ENCODE measurements at regions of chr12 and their contacts with region 1.

Region 1: DNA sequence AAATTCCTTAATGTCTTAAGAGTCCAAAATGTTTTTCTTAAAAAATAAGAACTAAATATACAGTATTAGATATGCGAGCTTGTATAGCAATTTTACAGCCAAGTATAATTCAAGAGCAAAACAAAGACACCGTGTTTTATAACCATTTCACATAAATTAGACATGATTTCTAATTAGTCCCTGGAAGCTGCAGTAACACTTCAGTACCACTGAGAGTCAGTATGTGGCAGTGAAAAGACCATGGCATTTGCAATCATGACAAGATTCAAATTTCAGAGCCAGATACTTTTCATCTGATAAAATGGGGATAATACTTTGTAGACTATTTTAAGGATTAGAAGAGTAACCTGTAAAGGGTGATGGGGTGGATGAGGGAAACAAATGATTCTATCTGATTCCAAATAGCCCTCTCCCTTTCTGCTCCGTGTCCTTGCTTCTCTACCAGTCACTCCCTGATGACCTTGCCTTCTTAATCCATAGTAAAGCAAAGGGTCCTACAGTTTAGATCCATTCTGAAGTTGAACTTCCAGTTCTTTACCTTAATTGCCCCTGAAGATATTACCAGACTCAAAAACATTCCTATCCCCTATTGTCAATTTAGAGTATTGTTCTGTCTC is 145.4 kb upstream of the ABCD2 start:
- DNase-seq: peak; percentile 56
- H3K4me3 ChIP-seq: no peak overlapping the region
- H3K27ac ChIP-seq: no peak overlapping the region
- H3K4me1 ChIP-seq: no peaks in the 10 kb centered on the region
- H3K27me3 ChIP-seq: no peaks in the 10 kb centered on the region
- CTCF ChIP-seq: peak; percentile 93

Region 2: GRCh38 chr12:39632670-39633069 is 132.4 kb before region 1 on chr12:
- CTCF ChIA-PET with region 1: no interaction called
- POLR2A ChIA-PET with region 1: no interaction called
- intact Hi-C with region 1: no loop called
- DNase-seq: no peak
- H3K4me3 ChIP-seq: no peak overlapping the region
- H3K27ac ChIP-seq: no peak overlapping the region
- H3K4me1 ChIP-seq: no peaks in the 10 kb centered on the region
- H3K27me3 ChIP-seq: no peaks in the 10 kb centered on the region
- CTCF ChIP-seq: no peak

Region 3: GRCh38 chr12:39990122-39991101 is 225.4 kb after region 1 on chr12:
- CTCF ChIA-PET with region 1: no interaction called
- POLR2A ChIA-PET with region 1: no interaction called
- intact Hi-C with region 1: loop called (anchors 1 kb)
- DNase-seq: peak; percentile 71
- H3K4me3 ChIP-seq: no peak overlapping the region
- H3K27ac ChIP-seq: no peak overlapping the region
- H3K4me1 ChIP-seq: peaks cover 20% of the 10 kb centered on the region
- H3K27me3 ChIP-seq: no peaks in the 10 kb centered on the region
- CTCF ChIP-seq: peak; percentile 86

Region 4: GRCh38 chr12:40152783-40153383 is 387.8 kb after region 1 on chr12:
- CTCF ChIA-PET with region 1: no interaction called
- POLR2A ChIA-PET with region 1: no interaction called
- intact Hi-C with region 1: loop called (anchors 5 kb)
- DNase-seq: peak; percentile 73
- H3K4me3 ChIP-seq: no peak overlapping the region
- H3K27ac ChIP-seq: no peak overlapping the region
- H3K4me1 ChIP-seq: no peaks in the 10 kb centered on the region
- H3K27me3 ChIP-seq: no peaks in the 10 kb centered on the region
- CTCF ChIP-seq: peak; percentile 88

Region 5: DNA sequence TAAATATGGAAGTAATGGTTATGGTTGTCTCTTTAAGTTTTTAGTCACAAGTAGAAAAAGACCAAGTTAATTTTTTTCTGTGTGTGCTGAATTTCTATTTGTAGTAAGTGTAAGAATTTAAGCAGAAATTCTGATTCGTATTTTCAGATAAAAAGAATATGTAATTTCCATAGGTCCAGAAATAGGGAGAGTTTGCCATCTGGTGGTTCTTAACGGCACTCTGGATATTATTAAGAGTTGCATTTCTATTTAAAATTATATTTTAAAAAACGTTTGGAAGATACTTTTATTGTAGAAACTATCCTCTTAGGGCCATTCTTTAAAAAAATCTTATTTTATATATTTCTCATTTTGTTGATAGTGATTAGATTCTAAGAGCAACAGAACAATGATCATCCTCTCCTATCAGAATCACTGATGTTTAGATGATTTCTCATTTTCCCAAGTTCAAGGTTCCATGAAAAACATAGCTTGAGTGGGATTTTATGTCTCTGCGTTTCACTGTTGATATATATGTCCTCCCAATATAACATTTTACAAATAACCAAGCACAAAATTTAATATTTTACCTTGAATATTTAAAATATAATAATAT is 548.0 kb after region 1 on chr12:
- CTCF ChIA-PET with region 1: no interaction called
- POLR2A ChIA-PET with region 1: no interaction called
- intact Hi-C with region 1: loop called (anchors 5 kb)
- DNase-seq: peak; percentile 18
- H3K4me3 ChIP-seq: no peak overlapping the region
- H3K27ac ChIP-seq: no peak overlapping the region
- H3K4me1 ChIP-seq: peaks cover 3% of the 10 kb centered on the region
- H3K27me3 ChIP-seq: no peaks in the 10 kb centered on the region
- CTCF ChIP-seq: peak; percentile 72

Measured in A673 (cell line).